ENCODE measurements at regions of chr5 and their contacts with region 1.

Region 1: GRCh38 chr5:95781101-95781583 is 41.4 kb downstream of the GLRX start:
- DNase-seq: peak; percentile 62 to 73 (median 71)
- H3K4me3 ChIP-seq: no peak overlapping the region
- H3K4me3 Mint-ChIP-seq: peak overlapping the region in 7 of 8 donors; percentile 18 to 84 (median 72)
- H3K27ac ChIP-seq: no peak overlapping the region
- H3K27ac Mint-ChIP-seq: peak overlapping the region in 3 of 7 donors; percentile 9 to 82 (median 24)
- H3K4me1 ChIP-seq: no peaks in the 10 kb centered on the region
- H3K4me1 Mint-ChIP-seq: peaks cover 2 to 7% (median 6%) of the 10 kb centered on the region in 4 donors
- H3K27me3 ChIP-seq: no peaks in the 10 kb centered on the region
- H3K27me3 Mint-ChIP-seq: peaks cover 0 to 2% of the 10 kb centered on the region in 2 donors

Region 2: GRCh38 chr5:95508550-95508949 is 272.6 kb before region 1 on chr5:
- CTCF ChIA-PET with region 1: no interaction called
- POLR2A ChIA-PET with region 1: no interaction called
- intact Hi-C with region 1: no loop called
- DNase-seq: no peak
- H3K4me3 ChIP-seq: no peak overlapping the region
- H3K4me3 Mint-ChIP-seq: no peak overlapping the region
- H3K27ac ChIP-seq: no peak overlapping the region
- H3K27ac Mint-ChIP-seq: peak overlapping the region in 4 of 7 donors; percentile 5 to 85 (median 50)
- H3K4me1 ChIP-seq: no peaks in the 10 kb centered on the region
- H3K4me1 Mint-ChIP-seq: peaks cover 0 to 3% (median under 1%) of the 10 kb centered on the region in 4 donors
- H3K27me3 ChIP-seq: no peaks in the 10 kb centered on the region
- H3K27me3 Mint-ChIP-seq: no peaks in the 10 kb centered on the region

Region 3: DNA sequence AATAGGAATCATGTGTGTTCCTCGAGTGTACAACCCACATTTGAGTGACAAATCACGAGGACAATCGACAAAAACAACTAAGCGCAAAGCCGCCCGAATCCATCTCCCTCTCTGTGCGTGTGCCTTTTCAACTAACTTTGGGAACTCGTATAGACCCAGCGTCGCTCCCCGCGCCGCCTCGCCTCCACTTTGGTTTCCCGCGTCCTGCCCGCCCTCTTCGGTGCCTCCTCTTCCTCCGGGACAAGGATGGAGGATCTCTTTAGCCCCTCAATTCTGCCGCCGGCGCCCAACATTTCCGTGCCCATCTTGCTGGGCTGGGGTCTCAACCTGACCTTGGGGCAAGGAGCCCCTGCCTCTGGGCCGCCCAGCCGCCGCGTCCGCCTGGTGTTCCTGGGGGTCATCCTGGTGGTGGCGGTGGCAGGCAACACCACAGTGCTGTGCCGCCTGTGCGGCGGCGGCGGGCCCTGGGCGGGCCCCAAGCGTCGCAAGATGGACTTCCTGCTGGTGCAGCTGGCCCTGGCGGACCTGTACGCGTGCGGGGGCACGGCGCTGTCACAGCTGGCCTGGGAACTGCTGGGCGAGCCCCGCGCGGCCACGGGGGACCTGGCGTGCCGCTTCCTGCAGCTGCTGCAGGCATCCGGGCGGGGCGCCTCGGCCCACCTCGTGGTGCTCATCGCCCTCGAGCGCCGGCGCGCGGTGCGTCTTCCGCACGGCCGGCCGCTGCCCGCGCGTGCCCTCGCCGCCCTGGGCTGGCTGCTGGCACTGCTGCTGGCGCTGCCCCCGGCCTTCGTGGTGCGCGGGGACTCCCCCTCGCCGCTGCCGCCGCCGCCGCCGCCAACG is 160.9 kb before region 1 on chr5 and contains the start of gene GPR150:
- CTCF ChIA-PET with region 1: interaction called, 12 read pairs
- POLR2A ChIA-PET with region 1: no interaction called
- intact Hi-C with region 1: no loop called
- DNase-seq: peak; percentile 58 to 72 (median 64)
- H3K4me3 ChIP-seq: peak within 1 kb of the TSS; percentile 38 to 73
- H3K4me3 Mint-ChIP-seq: peak within 1 kb of the TSS; percentile 90 to 97 (median 94)
- H3K27ac ChIP-seq: peak within 1 kb of the TSS; percentile 69
- H3K27ac Mint-ChIP-seq: peak within 1 kb of the TSS; percentile 23 to 95 (median 86)
- H3K4me1 ChIP-seq: peaks cover 72% of the 10 kb centered on the region
- H3K4me1 Mint-ChIP-seq: peaks cover 57 to 76% (median 67%) of the 10 kb centered on the region in 4 donors
- H3K27me3 ChIP-seq: no peaks in the 10 kb centered on the region
- H3K27me3 Mint-ChIP-seq: no peaks in the 10 kb centered on the region
- total RNA-seq, gene GPR150: 1.5 to 2.4 TPM

Region 4: DNA sequence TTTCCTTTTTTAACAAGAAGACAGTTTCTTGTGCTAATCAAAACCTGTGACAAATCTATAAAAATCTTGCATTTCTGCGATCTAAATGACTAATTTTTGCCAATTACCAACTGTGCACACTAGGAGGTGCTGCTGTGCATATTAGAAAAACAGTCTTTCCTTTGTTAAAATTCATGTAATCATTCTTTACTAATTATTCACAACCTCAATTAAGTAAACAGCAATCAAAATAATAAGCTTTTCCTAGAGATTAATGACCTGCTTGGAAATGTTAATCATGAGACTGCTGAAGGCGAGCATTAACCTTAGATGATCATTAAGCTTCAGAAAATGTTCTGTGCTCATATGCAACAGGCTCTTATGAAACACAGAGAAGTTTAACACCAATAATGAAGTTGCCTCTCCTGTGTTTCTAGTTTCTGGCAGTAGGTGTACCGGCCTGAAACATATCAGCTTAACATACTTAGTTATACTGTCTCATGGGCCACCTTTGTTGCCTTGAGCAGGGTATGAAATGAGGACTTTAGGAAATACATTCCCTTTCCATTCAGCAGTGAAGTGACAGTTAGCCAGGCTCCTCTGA is 116.8 kb before region 1 on chr5:
- CTCF ChIA-PET with region 1: interaction called, 36 read pairs
- POLR2A ChIA-PET with region 1: no interaction called
- intact Hi-C with region 1: loop called (anchors 1 kb)
- DNase-seq: peak in 4 of 5 donors; percentile 30 to 34 (median 31)
- H3K4me3 ChIP-seq: no peak overlapping the region
- H3K4me3 Mint-ChIP-seq: no peak overlapping the region
- H3K27ac ChIP-seq: no peak overlapping the region
- H3K27ac Mint-ChIP-seq: no peak overlapping the region
- H3K4me1 ChIP-seq: peaks cover 8% of the 10 kb centered on the region
- H3K4me1 Mint-ChIP-seq: peaks cover 0 to 4% (median 1%) of the 10 kb centered on the region in 4 donors
- H3K27me3 ChIP-seq: no peaks in the 10 kb centered on the region
- H3K27me3 Mint-ChIP-seq: no peaks in the 10 kb centered on the region

Region 5: DNA sequence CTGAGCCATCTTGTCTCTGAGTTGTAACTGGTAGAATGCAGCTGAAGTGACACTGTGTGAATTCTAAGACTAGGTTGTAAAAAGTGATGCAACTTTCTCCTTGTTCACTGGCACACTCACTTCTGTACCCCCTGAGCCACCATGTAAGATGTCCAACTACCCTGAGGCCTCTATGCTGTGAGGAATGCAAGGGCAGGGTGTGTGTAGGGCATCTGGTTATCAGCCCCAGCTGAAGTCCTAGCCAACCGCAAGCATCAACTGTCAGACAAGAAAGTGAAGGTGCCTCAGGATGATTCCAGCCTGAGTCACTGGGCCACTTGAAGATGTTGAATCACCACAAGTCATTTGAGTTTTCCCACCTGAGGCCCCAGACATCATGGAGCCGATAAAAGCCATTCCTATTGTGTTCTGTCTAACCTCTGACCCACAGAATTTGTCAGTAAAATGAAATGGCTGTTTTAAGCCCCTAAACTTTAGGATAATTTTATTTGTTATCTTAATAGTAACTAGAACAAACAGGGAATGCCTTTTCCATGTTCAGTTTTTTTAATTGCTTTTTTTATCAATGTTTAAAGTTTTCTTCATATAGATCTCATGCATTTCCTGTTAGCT is 68.7 kb before region 1 on chr5:
- CTCF ChIA-PET with region 1: no interaction called
- POLR2A ChIA-PET with region 1: no interaction called
- intact Hi-C with region 1: no loop called
- DNase-seq: no peak
- H3K4me3 ChIP-seq: no peak overlapping the region
- H3K4me3 Mint-ChIP-seq: no peak overlapping the region
- H3K27ac ChIP-seq: no peak overlapping the region
- H3K27ac Mint-ChIP-seq: no peak overlapping the region
- H3K4me1 ChIP-seq: peaks cover 12% of the 10 kb centered on the region
- H3K4me1 Mint-ChIP-seq: peaks cover 0 to 12% (median 11%) of the 10 kb centered on the region in 4 donors
- H3K27me3 ChIP-seq: no peaks in the 10 kb centered on the region
- H3K27me3 Mint-ChIP-seq: peaks cover 4 to 9% of the 10 kb centered on the region in 2 donors

Region 6: GRCh38 chr5:95793610-95794009 is 12.5 kb after region 1 on chr5:
- CTCF ChIA-PET with region 1: interaction called, 15 read pairs
- POLR2A ChIA-PET with region 1: no interaction called
- intact Hi-C with region 1: no loop called
- DNase-seq: no peak
- H3K4me3 ChIP-seq: no peak overlapping the region
- H3K4me3 Mint-ChIP-seq: no peak overlapping the region
- H3K27ac ChIP-seq: no peak overlapping the region
- H3K27ac Mint-ChIP-seq: peak overlapping the region in 1 of 7 donors; percentile 32
- H3K4me1 ChIP-seq: no peaks in the 10 kb centered on the region
- H3K4me1 Mint-ChIP-seq: peaks cover 0 to 3% (median 0%) of the 10 kb centered on the region in 4 donors
- H3K27me3 ChIP-seq: no peaks in the 10 kb centered on the region
- H3K27me3 Mint-ChIP-seq: no peaks in the 10 kb centered on the region

Region 7: DNA sequence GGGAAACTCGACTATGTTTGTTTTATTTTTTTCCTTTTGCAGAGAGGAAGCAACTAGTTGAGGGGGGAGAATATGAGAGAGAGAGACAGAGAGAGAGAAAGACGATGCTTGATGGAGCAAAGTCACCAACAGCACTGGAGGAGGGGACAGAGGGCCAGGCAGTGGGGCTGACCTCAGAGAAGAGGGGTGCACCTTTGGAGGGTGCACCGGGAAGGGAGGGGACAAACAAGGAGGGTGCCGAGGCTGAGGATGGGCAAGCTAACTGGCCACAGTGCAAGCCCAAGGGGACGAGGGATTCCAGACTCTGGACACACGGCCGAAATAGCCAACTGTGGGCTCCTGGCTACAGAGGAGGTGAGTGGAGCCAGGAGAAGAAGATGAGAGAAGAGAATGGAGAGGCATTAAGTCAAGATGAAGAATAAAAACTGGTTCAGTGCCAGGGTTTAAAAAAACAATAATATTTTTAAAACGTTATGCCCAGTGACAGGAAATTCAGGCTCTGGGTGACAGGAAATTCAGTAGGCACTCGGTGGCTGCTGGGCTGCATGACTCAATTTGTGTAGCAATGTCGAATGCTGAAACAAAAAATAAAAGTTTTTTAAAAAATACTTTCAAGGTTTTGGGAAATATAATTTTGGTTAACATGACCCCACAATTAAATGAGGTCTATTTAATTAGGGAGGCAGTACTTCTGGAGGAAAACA is 54.7 kb after region 1 on chr5:
- CTCF ChIA-PET with region 1: interaction called, 902 read pairs
- POLR2A ChIA-PET with region 1: interaction called, 25 read pairs
- intact Hi-C with region 1: no loop called
- DNase-seq: peak; percentile 28 to 70 (median 33)
- H3K4me3 ChIP-seq: peak overlapping the region; percentile 43 to 78
- H3K4me3 Mint-ChIP-seq: peak overlapping the region; percentile 82 to 98 (median 89)
- H3K27ac ChIP-seq: peak overlapping the region; percentile 77
- H3K27ac Mint-ChIP-seq: peak overlapping the region; percentile 87 to 97 (median 93)
- H3K4me1 ChIP-seq: peaks cover 39% of the 10 kb centered on the region
- H3K4me1 Mint-ChIP-seq: peaks cover 24 to 68% (median 49%) of the 10 kb centered on the region in 4 donors
- H3K27me3 ChIP-seq: no peaks in the 10 kb centered on the region
- H3K27me3 Mint-ChIP-seq: no peaks in the 10 kb centered on the region

Region 8: GRCh38 chr5:95961617-95962474 is 180.7 kb after region 1 on chr5 and contains the start of gene ELL2:
- CTCF ChIA-PET with region 1: interaction called, 3 read pairs
- POLR2A ChIA-PET with region 1: no interaction called
- intact Hi-C with region 1: loop called (anchors 10 kb)
- DNase-seq: peak; percentile 92 to 99 (median 94)
- H3K4me3 ChIP-seq: peak within 1 kb of the TSS; percentile 70 to 81
- H3K4me3 Mint-ChIP-seq: peak within 1 kb of the TSS; percentile 94 to 98 (median 96)
- H3K27ac ChIP-seq: peak within 1 kb of the TSS; percentile 83
- H3K27ac Mint-ChIP-seq: peak within 1 kb of the TSS; percentile 98 to 99 (median 99)
- H3K4me1 ChIP-seq: peaks cover 29% of the 10 kb centered on the region
- H3K4me1 Mint-ChIP-seq: peaks cover 24 to 47% (median 38%) of the 10 kb centered on the region in 4 donors
- H3K27me3 ChIP-seq: no peaks in the 10 kb centered on the region
- H3K27me3 Mint-ChIP-seq: peaks cover 0 to 3% of the 10 kb centered on the region in 2 donors
- total RNA-seq, gene ELL2: 14.0 to 15.6 TPM

Region 9: DNA sequence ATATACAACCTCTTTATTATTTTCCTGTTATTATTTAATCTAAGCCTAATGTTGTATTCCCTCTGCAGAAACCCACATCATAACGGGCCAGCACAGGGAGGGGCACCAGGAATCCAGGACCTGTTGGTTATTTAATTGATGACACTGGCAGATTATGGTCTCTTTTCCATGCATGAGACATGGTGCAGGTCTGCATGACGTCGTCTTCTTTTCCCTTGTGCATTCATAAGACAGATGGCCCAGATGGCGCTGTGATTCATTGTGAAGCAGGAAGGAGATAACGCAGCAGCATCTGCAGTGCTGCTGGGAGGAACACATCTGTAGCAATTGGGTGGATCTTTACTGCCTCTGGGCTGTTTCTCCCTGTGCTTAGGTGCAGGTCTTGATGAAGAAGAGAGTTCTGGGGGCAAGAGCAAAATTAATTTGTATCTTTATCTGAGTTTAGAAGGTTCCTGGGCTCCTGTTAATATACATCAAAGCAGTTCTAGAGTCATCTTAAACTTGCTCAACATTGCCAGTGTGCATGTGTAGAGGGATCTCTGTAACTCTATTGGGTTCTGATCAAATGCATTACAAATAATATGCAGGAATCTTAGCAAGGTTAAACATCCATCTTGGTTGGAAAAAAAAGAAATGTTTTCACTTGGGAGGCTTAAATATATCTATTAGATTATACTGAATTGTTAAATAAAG is 475.8 kb after region 1 on chr5:
- CTCF ChIA-PET with region 1: no interaction called
- POLR2A ChIA-PET with region 1: no interaction called
- intact Hi-C with region 1: no loop called
- DNase-seq: no peak
- H3K4me3 ChIP-seq: no peak overlapping the region
- H3K4me3 Mint-ChIP-seq: no peak overlapping the region
- H3K27ac ChIP-seq: no peak overlapping the region
- H3K27ac Mint-ChIP-seq: no peak overlapping the region
- H3K4me1 ChIP-seq: no peaks in the 10 kb centered on the region
- H3K4me1 Mint-ChIP-seq: no peaks in the 10 kb centered on the region
- H3K27me3 ChIP-seq: no peaks in the 10 kb centered on the region
- H3K27me3 Mint-ChIP-seq: peaks cover 0 to 4% of the 10 kb centered on the region in 2 donors

Region 10: DNA sequence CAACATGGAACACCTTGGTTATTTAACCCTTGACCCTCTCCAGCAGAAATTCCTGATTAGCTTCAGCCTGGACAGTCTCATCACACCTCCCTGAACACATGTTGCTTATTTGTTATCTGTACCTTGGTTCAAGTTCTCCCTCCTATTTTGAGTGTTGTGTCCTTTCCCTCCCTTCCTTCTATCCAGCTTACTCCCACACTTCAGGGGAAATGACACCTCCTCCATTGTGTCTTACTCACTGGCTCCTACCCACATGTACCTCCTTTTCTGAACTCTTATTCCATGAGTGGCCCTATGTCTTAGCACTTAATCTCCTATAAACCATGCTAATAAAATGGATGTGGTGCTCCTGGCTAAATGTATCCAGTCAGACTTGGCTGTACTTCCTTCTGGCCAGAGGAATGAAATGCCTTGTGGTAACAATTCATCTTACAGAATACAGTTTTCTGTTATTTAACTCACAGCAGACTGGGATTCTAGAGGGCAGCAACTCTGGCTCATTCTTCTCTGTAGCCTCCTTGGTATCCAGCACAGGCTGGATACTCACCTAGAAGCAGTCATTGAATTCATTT is 1350.1 kb after region 1 on chr5:
- CTCF ChIA-PET with region 1: no interaction called
- POLR2A ChIA-PET with region 1: no interaction called
- intact Hi-C with region 1: no loop called
- DNase-seq: no peak
- H3K4me3 ChIP-seq: no peak overlapping the region
- H3K4me3 Mint-ChIP-seq: no peak overlapping the region
- H3K27ac ChIP-seq: no peak overlapping the region
- H3K27ac Mint-ChIP-seq: no peak overlapping the region
- H3K4me1 ChIP-seq: no peaks in the 10 kb centered on the region
- H3K4me1 Mint-ChIP-seq: peaks cover 0 to 6% (median under 1%) of the 10 kb centered on the region in 4 donors
- H3K27me3 ChIP-seq: no peaks in the 10 kb centered on the region
- H3K27me3 Mint-ChIP-seq: peaks cover 4 to 6% of the 10 kb centered on the region in 2 donors

Measured in CD4-positive, alpha-beta memory T cell (primary cell).